ENCODE measurements at regions of chr12 and their contacts with region 1.

Region 1: DNA sequence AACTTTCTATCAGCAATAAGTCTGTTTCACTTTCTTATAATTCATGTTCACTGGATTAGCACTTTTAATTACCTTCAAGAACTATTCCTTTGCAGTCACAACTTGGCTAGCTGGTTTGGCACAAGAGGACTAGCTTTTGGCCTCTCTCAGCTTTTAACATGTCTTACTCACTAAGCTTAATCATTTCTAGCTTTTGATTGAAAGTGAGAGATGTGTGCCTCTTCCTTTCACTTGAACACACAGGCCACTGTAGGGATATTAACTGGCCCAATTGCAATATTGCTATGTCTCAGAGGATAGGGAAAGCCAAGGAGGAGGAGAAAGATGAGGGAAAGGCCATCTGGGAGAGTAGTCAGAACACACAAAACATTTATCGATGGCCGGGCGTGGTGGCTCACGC is 92.7 kb downstream of the PRICKLE1 start:
- DNase-seq: no peak
- H3K4me3 ChIP-seq: no peak overlapping the region
- CTCF ChIP-seq: no peak

Region 2: DNA sequence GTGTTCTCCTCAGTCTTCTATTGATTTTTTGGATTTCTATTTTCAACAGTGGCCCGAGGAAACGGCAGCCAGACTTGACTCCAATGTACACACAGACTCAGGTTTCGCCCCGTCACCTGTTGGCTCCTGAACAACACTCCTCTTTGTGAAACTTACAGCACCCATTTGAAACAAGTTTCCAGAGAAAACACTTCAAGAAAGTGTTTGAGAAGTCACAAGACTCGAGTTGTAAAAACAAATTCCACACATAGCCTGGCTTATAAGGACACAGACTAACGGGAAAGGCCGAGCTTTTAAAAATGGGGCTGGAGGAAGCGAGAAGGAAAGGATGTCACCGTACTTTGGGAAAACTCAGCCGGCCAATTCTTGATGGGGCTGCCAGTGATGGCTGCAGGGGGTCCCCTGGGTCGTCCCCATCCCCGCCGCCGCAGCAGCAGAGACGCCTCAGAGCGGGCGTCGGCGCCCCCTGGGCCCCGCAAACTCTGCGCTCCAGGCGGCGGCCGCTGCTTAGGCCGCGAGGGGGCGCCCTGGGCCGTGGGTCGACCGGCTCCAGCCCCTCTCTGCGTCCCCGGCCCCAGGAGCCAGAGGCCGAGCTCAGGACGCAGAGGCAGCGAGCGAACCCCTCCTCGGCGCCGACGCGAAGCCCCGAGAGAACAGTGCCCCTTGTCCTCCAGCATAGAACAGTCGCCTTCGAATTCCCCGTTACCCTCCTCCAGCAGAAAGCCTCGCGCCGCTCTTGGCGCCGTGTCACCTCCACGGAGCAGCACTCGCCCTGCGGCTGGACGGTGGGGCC is 14.2 kb before region 1 on chr12:
- CTCF ChIA-PET with region 1: interaction called, 18 read pairs
- POLR2A ChIA-PET with region 1: no interaction called
- DNase-seq: no peak
- H3K4me3 ChIP-seq: peak overlapping the region; percentile 73
- CTCF ChIP-seq: peak; percentile 94